K562 (cell line): ENCODE measurements at regions of chr16 and their contacts with region 1.

Region 1: DNA sequence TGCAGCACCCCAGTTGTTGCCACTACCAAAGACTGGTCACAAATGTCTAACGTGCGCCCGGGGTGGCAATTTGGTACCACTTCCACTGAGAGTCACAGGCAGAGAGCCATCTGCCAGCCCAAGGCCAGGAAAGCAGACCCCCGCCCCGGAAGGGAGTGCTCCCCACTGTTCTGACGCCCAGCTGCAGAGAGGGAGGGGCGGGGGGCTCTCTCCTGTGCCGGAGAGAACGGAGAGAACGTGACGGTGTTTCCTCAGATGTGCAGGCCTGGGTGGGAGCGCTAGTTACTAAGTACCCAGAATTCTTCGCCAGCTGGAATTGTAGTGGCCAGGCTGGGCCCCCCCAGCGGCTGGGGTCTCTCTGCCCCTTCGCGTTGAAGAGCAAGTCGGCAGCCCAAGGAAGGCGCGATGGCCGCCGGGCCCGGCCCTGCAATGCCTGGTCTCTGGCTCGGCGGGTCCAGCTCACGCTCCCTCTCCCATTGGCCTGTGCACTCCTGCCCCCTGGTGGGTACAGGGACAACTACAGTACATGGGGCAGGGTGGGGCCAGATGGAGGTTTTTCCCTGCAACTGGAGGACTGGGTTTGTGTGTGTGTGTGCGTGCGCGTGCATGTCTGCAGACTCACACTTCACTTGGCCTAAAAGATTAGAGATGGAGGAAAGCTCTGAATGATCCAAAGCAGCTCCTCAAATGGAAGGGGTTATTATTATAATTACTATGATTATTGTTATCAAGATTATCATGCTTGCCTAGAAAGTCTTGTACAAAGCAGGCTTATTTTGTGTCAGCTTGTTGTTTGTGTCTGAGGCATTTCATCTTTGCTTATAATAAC is 107.1 kb downstream of the AMFR start:
- DNase-seq: peak; percentile 78 to 95 (median 92)
- ATAC-seq: peak; percentile 96
- H3K4me3 ChIP-seq: no peak overlapping the region
- H3K27ac ChIP-seq: no peak overlapping the region
- H3K4me1 ChIP-seq: peaks cover 0 to 7% of the 10 kb centered on the region in 2 experiments; a peak in 2 of 5 replicates
- H3K27me3 ChIP-seq: peaks cover 5 to 40% of the 10 kb centered on the region in 2 experiments; a peak in 4 of 5 replicates
- CTCF ChIP-seq: peak; percentile 88 to 96 (median 91)
- EP300 ChIP-seq: no peak
- POLR2A ChIP-seq: no peak
- RAD21 ChIP-seq: peak; percentile 97 to 99

Region 2: GRCh38 chr16:55711959-55712876 is 606.0 kb before region 1 on chr16:
- CTCF ChIA-PET with region 1: interaction called, 5 read pairs
- POLR2A ChIA-PET with region 1: no interaction called
- in situ Hi-C with region 1: loop called (anchors 10 kb)
- intact Hi-C with region 1: loop called (anchors 1 kb)
- DNase-seq: peak; percentile 59 to 73 (median 68)
- ATAC-seq: peak; percentile 92
- H3K4me3 ChIP-seq: no peak overlapping the region
- H3K27ac ChIP-seq: no peak overlapping the region
- H3K4me1 ChIP-seq: no peaks in the 10 kb centered on the region
- H3K27me3 ChIP-seq: peaks cover 4 to 6% of the 10 kb centered on the region in 2 experiments; a peak in 3 of 5 replicates
- CTCF ChIP-seq: peak; percentile 67 to 75 (median 71)
- EP300 ChIP-seq: no peak
- POLR2A ChIP-seq: no peak
- RAD21 ChIP-seq: peak; percentile 83 to 90

Region 3: DNA sequence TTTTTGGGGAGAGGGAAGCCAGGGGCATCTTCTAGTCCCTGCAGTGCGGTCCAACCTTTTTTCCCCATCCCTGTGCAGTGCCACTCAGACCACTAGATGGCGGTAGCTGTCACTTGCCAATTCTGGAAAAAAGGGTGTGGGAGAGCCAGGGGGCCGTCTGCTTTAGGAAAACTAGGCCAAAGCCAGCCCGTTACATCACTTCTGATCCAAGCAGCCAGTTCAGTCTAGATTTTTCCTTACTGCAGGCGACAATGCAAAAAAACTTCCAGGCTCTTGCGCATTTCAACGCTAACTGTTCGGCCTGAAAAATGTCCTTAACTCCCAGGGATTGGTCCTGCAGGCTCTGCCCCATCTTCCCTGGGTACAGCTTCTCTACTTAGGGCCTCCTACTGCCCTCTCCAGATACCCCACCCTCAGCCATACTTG is 373.8 kb before region 1 on chr16:
- CTCF ChIA-PET with region 1: interaction called, 5 read pairs
- POLR2A ChIA-PET with region 1: no interaction called
- in situ Hi-C with region 1: loop called (anchors 5 kb)
- intact Hi-C with region 1: loop called (anchors 2 kb)
- DNase-seq: peak; percentile 64 to 69 (median 66)
- ATAC-seq: peak; percentile 94
- H3K4me3 ChIP-seq: no peak overlapping the region
- H3K27ac ChIP-seq: no peak overlapping the region
- H3K4me1 ChIP-seq: no peaks in the 10 kb centered on the region; a peak in 1 of 5 replicates
- H3K27me3 ChIP-seq: no peaks in the 10 kb centered on the region
- CTCF ChIP-seq: peak; percentile 76 to 92 (median 89)
- EP300 ChIP-seq: no peak
- POLR2A ChIP-seq: no peak
- RAD21 ChIP-seq: peak; percentile 78 to 79

Region 4: DNA sequence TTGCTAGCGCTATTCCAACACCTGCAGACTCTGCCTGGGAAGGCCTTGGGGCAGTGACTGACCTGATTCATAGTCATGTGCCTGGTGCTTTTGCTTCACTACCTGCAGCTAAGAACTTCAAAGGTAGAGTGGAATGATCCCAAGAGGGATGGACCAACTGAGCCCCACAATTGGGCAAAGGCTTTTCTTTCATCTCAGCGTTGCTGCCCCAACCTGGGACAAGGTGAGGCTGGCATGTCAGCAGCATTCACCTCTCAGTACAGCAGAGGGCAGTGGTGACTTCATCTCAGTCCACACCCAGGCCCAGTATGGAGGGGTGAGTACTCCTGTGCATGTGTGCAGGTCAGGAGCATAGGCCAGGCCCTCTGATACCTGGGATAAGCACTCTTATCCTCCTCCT is 276.5 kb before region 1 on chr16:
- CTCF ChIA-PET with region 1: interaction called, 4 read pairs
- POLR2A ChIA-PET with region 1: no interaction called
- in situ Hi-C with region 1: no loop called
- intact Hi-C with region 1: loop called (anchors 1 kb)
- DNase-seq: peak; percentile 23 to 32 (median 26)
- ATAC-seq: peak; percentile 92
- H3K4me3 ChIP-seq: no peak overlapping the region
- H3K27ac ChIP-seq: no peak overlapping the region
- H3K4me1 ChIP-seq: no peaks in the 10 kb centered on the region
- H3K27me3 ChIP-seq: no peaks in the 10 kb centered on the region
- CTCF ChIP-seq: peak; percentile 52 to 61 (median 54)
- EP300 ChIP-seq: no peak
- POLR2A ChIP-seq: no peak
- RAD21 ChIP-seq: peak; percentile 57 to 69

Region 5: DNA sequence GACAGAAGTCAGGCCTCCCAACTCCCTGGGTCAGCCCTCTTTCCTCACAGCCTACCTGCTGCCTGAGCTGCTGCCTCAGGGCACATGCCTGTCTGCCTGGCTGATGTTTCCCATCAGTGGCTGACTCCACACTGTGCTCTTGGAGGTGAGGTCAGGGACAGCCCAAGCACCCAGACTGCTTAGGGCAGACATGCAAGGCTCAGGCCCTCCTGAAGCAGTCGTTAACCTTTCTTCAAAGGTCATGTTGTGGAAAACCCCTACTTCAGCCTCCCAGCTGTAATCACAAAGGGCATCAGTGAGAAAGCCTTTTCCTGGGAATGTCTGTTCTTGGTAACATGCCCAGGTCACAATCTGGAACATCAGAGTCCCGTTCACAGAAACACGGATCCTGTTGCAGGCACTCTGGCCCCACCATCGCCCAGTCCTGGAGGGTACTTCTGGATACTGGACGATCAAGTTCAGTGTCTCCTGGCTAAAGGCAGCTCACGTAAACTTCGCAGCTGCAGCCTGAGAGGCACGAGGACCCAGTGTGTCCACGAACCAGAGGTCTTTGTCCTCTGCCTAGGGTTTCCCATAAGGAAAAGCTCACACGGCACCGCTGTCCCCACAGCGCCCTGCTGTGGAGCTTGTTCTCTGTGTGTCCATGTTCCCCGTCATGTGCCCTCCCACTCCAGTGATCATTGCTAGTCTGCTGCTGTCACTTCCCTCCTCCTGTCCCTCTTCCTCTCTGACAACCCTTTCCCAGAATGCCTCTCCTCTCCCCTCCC is 72.0 kb before region 1 on chr16:
- CTCF ChIA-PET with region 1: no interaction called
- POLR2A ChIA-PET with region 1: no interaction called
- in situ Hi-C with region 1: no loop called
- intact Hi-C with region 1: loop called (anchors 5 kb)
- DNase-seq: peak in 2 of 4 experiments; percentile 23 to 50
- ATAC-seq: peak; percentile 86
- H3K4me3 ChIP-seq: no peak overlapping the region
- H3K27ac ChIP-seq: no peak overlapping the region
- H3K4me1 ChIP-seq: peaks cover 7% of the 10 kb centered on the region in 2 experiments; a peak in 4 of 5 replicates
- H3K27me3 ChIP-seq: no peaks in the 10 kb centered on the region; a peak in 1 of 5 replicates
- CTCF ChIP-seq: peak; percentile 8 to 45 (median 20); a peak in 2 of 6 replicates
- EP300 ChIP-seq: no peak
- POLR2A ChIP-seq: no peak
- RAD21 ChIP-seq: peak; percentile 19 to 45